ENCODE measurements at regions of chr1 and their contacts with region 1.

Region 1: DNA sequence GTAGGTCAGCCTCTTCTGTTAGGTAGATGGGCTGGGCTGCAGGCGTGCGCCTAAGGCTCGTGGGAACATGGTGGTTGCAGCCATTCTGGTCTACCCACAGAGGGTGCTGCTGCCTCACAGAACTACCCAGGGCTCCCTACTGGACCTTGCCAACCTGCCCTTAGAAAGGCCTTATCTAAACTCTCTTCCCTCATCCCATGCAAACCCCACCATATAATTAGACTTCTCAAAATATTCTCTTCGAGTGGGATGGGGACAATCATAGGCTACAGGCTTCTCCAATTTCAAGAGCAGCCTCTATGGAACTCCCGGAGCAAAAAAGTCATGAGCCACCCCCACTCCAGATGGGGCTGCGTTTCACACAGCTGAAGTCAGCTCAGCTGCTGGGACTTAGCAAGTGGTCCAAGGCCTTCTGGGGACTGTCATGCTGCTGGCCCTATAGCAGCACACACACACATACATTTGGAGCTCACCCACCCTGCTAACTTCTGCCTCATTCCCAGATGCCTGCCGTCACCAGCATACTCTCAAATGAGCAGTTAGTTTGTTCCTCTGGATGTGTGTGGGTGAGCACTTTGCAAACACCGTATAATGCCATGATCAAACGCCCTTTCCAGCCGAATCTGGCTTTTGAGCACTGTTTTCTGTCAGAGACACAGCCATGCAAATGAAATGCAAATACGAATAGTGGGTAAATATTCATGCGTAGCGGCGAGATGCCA is 6.1 kb upstream of the SDHB start:
- DNase-seq: peak; percentile 78
- ATAC-seq: peak; percentile 97
- H3K4me3 ChIP-seq: no peak overlapping the region
- H3K27ac ChIP-seq: no peak overlapping the region
- H3K4me1 ChIP-seq: 0 out of 2 replicates have a peak, but pooled peaks cover 5% of the 10 kb centered on the region
- H3K27me3 ChIP-seq: no peaks in the 10 kb centered on the region
- CTCF ChIP-seq: peak; percentile 86

Region 2: GRCh38 chr1:16300436-16300835 is 759.5 kb before region 1 on chr1:
- CTCF ChIA-PET with region 1: no interaction called
- POLR2A ChIA-PET with region 1: no interaction called
- intact Hi-C with region 1: no loop called
- DNase-seq: no peak
- ATAC-seq: peak; percentile 39
- H3K4me3 ChIP-seq: no peak overlapping the region
- H3K27ac ChIP-seq: no peak overlapping the region
- H3K4me1 ChIP-seq: no peaks in the 10 kb centered on the region
- H3K27me3 ChIP-seq: no peaks in the 10 kb centered on the region
- CTCF ChIP-seq: no peak

Region 3: DNA sequence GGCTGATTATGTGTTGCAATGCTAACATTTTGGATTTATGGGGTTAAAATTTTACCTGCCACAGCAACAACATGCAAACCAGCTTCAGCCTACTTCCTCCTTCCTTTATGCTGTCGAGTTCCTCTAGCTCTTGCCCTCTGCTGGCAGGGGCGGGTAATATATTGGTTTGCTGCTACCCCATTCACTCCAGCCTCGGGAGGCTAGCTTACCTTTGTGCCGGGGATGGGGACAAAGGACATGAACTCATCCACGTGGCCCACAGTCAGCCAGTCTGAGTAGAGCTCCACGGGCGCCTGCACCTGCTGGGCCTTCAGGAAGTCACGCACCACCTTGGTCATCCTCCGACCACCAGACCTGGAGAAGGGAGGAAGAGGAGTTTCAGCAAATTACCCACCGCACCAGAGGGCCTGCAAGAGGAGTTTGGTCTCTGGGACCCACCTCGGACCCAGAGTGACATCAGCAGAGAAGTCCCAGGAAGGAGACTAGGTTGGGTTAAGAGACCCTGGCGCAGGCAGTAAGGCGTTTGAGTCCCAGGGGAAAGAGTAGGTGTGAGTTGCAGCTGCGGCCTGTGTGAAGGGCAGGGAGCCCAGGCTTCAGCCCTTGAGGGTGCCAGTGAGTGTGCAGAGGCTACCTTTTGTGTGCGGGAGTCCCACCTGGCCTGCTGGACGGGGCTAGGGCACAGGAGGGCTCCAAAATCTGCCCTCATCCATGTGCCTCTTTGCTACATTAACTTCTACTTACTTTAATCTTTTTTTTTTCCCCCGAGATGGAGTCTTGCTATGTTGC is 15.8 kb after region 1 on chr1:
- CTCF ChIA-PET with region 1: interaction called, 6 read pairs
- POLR2A ChIA-PET with region 1: no interaction called
- intact Hi-C with region 1: loop called (anchors 1 kb)
- DNase-seq: peak; percentile 72
- ATAC-seq: peak; percentile 96
- H3K4me3 ChIP-seq: no peak overlapping the region
- H3K27ac ChIP-seq: no peak overlapping the region
- H3K4me1 ChIP-seq: no peaks in the 10 kb centered on the region
- H3K27me3 ChIP-seq: no peaks in the 10 kb centered on the region
- CTCF ChIP-seq: peak; percentile 76

Region 4: DNA sequence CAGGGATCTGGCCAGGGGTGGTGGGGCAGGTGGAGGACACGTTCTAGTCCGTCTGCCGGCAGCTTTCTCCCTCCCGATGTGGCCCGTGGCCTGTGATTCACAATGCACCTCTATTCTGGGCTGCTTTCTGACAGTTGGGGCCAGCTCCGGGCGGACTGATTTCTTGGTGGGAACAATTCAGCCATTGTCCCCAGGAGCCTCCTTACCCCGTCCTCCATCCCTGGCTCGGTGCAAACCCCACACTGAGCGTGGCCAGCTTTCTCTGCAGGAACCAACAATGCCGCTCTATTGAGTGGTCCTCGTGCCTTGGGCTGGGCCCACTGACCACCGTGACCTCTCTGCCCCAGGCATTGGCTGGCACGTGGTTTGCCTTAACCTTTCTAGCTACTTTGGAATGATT is 29.6 kb after region 1 on chr1:
- CTCF ChIA-PET with region 1: no interaction called
- POLR2A ChIA-PET with region 1: no interaction called
- intact Hi-C with region 1: no loop called
- DNase-seq: no peak
- ATAC-seq: no peak
- H3K4me3 ChIP-seq: no peak overlapping the region
- H3K27ac ChIP-seq: no peak overlapping the region
- H3K4me1 ChIP-seq: no peaks in the 10 kb centered on the region
- H3K27me3 ChIP-seq: no peaks in the 10 kb centered on the region
- CTCF ChIP-seq: no peak

Region 5: GRCh38 chr1:17405898-17406759 is 346.2 kb after region 1 on chr1:
- CTCF ChIA-PET with region 1: no interaction called
- POLR2A ChIA-PET with region 1: no interaction called
- intact Hi-C with region 1: loop called (anchors 2 kb)
- DNase-seq: peak; percentile 65
- ATAC-seq: peak; percentile 80
- H3K4me3 ChIP-seq: no peak overlapping the region
- H3K27ac ChIP-seq: no peak overlapping the region
- H3K4me1 ChIP-seq: peaks cover 11% of the 10 kb centered on the region
- H3K27me3 ChIP-seq: no peaks in the 10 kb centered on the region
- CTCF ChIP-seq: peak; percentile 88

Measured in PC-3 (cell line).